CD4-positive, alpha-beta T cell (primary cell): ENCODE measurements at regions of chr1 and their contacts with region 1.

Region 1: GRCh38 chr1:64966158-64966971 is at the start of gene JAK1:
- DNase-seq: peak; percentile 80 to 96 (median 91)
- ATAC-seq: peak; percentile 78
- H3K4me3 ChIP-seq: peak within 1 kb of the TSS; percentile 89
- H3K4me3 Mint-ChIP-seq: peak within 1 kb of the TSS; percentile 98
- H3K27ac ChIP-seq: peak within 1 kb of the TSS; percentile 84 to 96
- H3K27ac Mint-ChIP-seq: peak within 1 kb of the TSS; percentile 97
- H3K4me1 ChIP-seq: peaks cover 38% of the 10 kb centered on the region
- H3K4me1 Mint-ChIP-seq: peaks cover 56% of the 10 kb centered on the region
- H3K27me3 ChIP-seq: no peaks in the 10 kb centered on the region
- H3K27me3 Mint-ChIP-seq: no peaks in the 10 kb centered on the region
- CTCF ChIP-seq: no peak
- total RNA-seq, gene JAK1: 240 to 252 TPM

Region 2: GRCh38 chr1:64584479-64584878 is 381.9 kb before region 1 on chr1:
- CTCF ChIA-PET with region 1: no interaction called
- POLR2A ChIA-PET with region 1: no interaction called
- intact Hi-C with region 1: no loop called
- DNase-seq: peak in 1 of 14 experiments; percentile 4
- ATAC-seq: no peak
- H3K4me3 ChIP-seq: no peak overlapping the region
- H3K4me3 Mint-ChIP-seq: no peak overlapping the region
- H3K27ac ChIP-seq: no peak overlapping the region
- H3K27ac Mint-ChIP-seq: no peak overlapping the region
- H3K4me1 ChIP-seq: no peaks in the 10 kb centered on the region
- H3K4me1 Mint-ChIP-seq: peaks cover 20% of the 10 kb centered on the region
- H3K27me3 ChIP-seq: no peaks in the 10 kb centered on the region
- H3K27me3 Mint-ChIP-seq: no peaks in the 10 kb centered on the region
- CTCF ChIP-seq: peak; percentile 29

Region 3: DNA sequence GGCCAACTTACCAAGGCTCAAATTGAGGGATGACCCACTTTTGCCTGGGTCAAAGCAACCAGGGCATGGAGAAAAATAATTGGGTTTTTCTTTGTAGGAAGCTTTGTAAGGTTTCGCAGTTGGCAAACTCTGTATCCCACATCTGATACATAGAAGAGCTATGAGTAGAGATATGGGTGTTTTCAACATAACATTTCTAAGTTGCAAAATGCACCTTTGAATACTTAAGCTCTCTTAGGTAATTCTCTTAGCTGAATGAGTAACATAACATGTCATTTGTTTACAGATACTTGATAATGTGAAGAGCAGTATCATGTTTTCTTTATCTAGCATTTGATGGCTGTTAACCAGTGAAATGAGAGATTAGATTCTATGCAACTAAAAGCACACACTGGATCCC is 200.0 kb before region 1 on chr1:
- CTCF ChIA-PET with region 1: no interaction called
- POLR2A ChIA-PET with region 1: no interaction called
- intact Hi-C with region 1: no loop called
- DNase-seq: no peak
- ATAC-seq: no peak
- H3K4me3 ChIP-seq: no peak overlapping the region
- H3K4me3 Mint-ChIP-seq: no peak overlapping the region
- H3K27ac ChIP-seq: no peak overlapping the region
- H3K27ac Mint-ChIP-seq: no peak overlapping the region
- H3K4me1 ChIP-seq: no peaks in the 10 kb centered on the region
- H3K4me1 Mint-ChIP-seq: peaks cover 19% of the 10 kb centered on the region
- H3K27me3 ChIP-seq: no peaks in the 10 kb centered on the region
- H3K27me3 Mint-ChIP-seq: no peaks in the 10 kb centered on the region
- CTCF ChIP-seq: no peak

Region 4: DNA sequence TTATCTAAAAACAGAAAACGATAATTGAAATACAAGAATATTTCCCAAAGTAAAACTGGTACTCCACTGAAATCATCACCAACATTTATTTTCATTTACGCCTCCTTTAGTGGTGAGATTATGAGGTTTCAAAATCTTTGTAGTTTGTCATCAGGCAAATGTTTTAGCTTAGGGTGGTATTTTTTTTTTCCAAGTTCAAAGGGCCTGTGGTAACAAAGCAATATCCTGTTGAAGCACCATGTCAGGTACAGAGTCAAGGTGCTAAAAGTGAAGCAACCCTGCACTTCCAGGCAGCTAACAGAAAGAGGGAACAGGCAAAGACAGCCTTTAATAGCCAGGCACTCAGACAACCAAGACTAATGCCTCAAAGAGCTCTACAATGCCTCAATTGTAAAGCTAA is 89.2 kb before region 1 on chr1:
- CTCF ChIA-PET with region 1: interaction called, 4 read pairs
- POLR2A ChIA-PET with region 1: interaction called, 58 read pairs
- intact Hi-C with region 1: loop called (anchors 1 to 2 kb)
- DNase-seq: peak in 10 of 14 experiments; percentile 15 to 90 (median 36)
- ATAC-seq: peak; percentile 93
- H3K4me3 ChIP-seq: no peak overlapping the region
- H3K4me3 Mint-ChIP-seq: peak overlapping the region; percentile 68
- H3K27ac ChIP-seq: peak overlapping the region in 1 of 2 donors; percentile 53
- H3K27ac Mint-ChIP-seq: peak overlapping the region; percentile 82
- H3K4me1 ChIP-seq: peaks cover 33% of the 10 kb centered on the region
- H3K4me1 Mint-ChIP-seq: peaks cover 84% of the 10 kb centered on the region
- H3K27me3 ChIP-seq: no peaks in the 10 kb centered on the region
- H3K27me3 Mint-ChIP-seq: no peaks in the 10 kb centered on the region
- CTCF ChIP-seq: no peak

Region 5: DNA sequence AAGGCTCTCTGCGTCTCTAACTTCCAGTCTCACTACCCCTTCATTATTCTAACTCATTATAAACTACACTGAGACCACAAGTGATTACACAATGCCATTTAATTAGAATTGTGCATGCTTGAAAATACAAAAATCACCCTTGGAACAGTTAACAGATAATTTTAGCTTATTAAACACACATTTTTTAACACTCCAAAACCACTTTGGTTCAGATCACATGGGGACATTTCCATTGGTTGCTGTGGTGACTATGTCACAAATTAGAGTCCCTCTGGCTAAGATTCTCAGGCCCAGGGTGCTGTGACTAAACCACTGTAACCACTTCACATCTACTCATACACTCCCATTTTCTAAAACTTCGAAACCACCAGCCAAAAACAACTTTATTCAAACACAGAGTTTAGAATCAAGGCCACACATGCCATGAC is 43.1 kb before region 1 on chr1:
- CTCF ChIA-PET with region 1: interaction called, 9 read pairs
- POLR2A ChIA-PET with region 1: interaction called, 19 read pairs
- intact Hi-C with region 1: loop called (anchors 5 kb)
- DNase-seq: peak in 4 of 14 experiments; percentile 16 to 68 (median 34)
- ATAC-seq: peak; percentile 40
- H3K4me3 ChIP-seq: no peak overlapping the region
- H3K4me3 Mint-ChIP-seq: peak overlapping the region; percentile 22
- H3K27ac ChIP-seq: no peak overlapping the region
- H3K27ac Mint-ChIP-seq: peak overlapping the region; percentile 57
- H3K4me1 ChIP-seq: peaks cover 66% of the 10 kb centered on the region
- H3K4me1 Mint-ChIP-seq: peaks cover 99% of the 10 kb centered on the region
- H3K27me3 ChIP-seq: no peaks in the 10 kb centered on the region
- H3K27me3 Mint-ChIP-seq: no peaks in the 10 kb centered on the region
- CTCF ChIP-seq: no peak

Region 6: GRCh38 chr1:65002508-65003315 is 36.3 kb after region 1 on chr1:
- CTCF ChIA-PET with region 1: interaction called, 6 read pairs
- POLR2A ChIA-PET with region 1: interaction called, 65 read pairs
- intact Hi-C with region 1: loop called (anchors 1 to 2 kb)
- DNase-seq: peak; percentile 47 to 92 (median 64)
- ATAC-seq: peak; percentile 89
- H3K4me3 ChIP-seq: peak overlapping the region; percentile 67
- H3K4me3 Mint-ChIP-seq: peak overlapping the region; percentile 74
- H3K27ac ChIP-seq: no peak overlapping the region
- H3K27ac Mint-ChIP-seq: peak overlapping the region; percentile 86
- H3K4me1 ChIP-seq: peaks cover 23% of the 10 kb centered on the region
- H3K4me1 Mint-ChIP-seq: peaks cover 27% of the 10 kb centered on the region
- H3K27me3 ChIP-seq: no peaks in the 10 kb centered on the region
- H3K27me3 Mint-ChIP-seq: no peaks in the 10 kb centered on the region
- CTCF ChIP-seq: no peak

Region 7: GRCh38 chr1:65067491-65068201 is 101.3 kb after region 1 on chr1:
- CTCF ChIA-PET with region 1: interaction called, 3 read pairs
- POLR2A ChIA-PET with region 1: interaction called, 48 read pairs
- intact Hi-C with region 1: loop called (anchors 2 to 5 kb)
- DNase-seq: peak; percentile 34 to 85 (median 60)
- ATAC-seq: peak; percentile 19
- H3K4me3 ChIP-seq: peak overlapping the region; percentile 85
- H3K4me3 Mint-ChIP-seq: peak overlapping the region; percentile 90
- H3K27ac ChIP-seq: peak overlapping the region; percentile 96 to 98
- H3K27ac Mint-ChIP-seq: peak overlapping the region; percentile 97
- H3K4me1 ChIP-seq: peaks cover 34% of the 10 kb centered on the region
- H3K4me1 Mint-ChIP-seq: peaks cover 64% of the 10 kb centered on the region
- H3K27me3 ChIP-seq: no peaks in the 10 kb centered on the region
- H3K27me3 Mint-ChIP-seq: no peaks in the 10 kb centered on the region
- CTCF ChIP-seq: no peak